Naive thymus-derived CD4-positive, alpha-beta T cell (primary cell): ENCODE measurements at regions of chr16 and their contacts with region 1.

Region 1: GRCh38 chr16:30429678-30430427 is at the start of gene DCTPP1:
- DNase-seq: peak; percentile 79 to 99 (median 97)
- ATAC-seq: peak; percentile 98
- H3K4me3 ChIP-seq: peak within 1 kb of the TSS; percentile 67
- H3K4me3 Mint-ChIP-seq: no peak within 1 kb of the TSS
- H3K27ac ChIP-seq: peak within 1 kb of the TSS; percentile 85
- H3K27ac Mint-ChIP-seq: peak within 1 kb of the TSS in 1 of 9 donors; percentile 38
- H3K4me1 ChIP-seq: peaks cover 16 to 19% of the 10 kb centered on the region in 2 donors
- H3K4me1 Mint-ChIP-seq: peaks cover 14 to 29% (median 21%) of the 10 kb centered on the region in 7 donors
- H3K27me3 ChIP-seq: no peaks in the 10 kb centered on the region
- H3K27me3 Mint-ChIP-seq: no peaks in the 10 kb centered on the region
- total RNA-seq, gene DCTPP1: 11.6 to 74.1 (median 13.8) TPM

Region 2: DNA sequence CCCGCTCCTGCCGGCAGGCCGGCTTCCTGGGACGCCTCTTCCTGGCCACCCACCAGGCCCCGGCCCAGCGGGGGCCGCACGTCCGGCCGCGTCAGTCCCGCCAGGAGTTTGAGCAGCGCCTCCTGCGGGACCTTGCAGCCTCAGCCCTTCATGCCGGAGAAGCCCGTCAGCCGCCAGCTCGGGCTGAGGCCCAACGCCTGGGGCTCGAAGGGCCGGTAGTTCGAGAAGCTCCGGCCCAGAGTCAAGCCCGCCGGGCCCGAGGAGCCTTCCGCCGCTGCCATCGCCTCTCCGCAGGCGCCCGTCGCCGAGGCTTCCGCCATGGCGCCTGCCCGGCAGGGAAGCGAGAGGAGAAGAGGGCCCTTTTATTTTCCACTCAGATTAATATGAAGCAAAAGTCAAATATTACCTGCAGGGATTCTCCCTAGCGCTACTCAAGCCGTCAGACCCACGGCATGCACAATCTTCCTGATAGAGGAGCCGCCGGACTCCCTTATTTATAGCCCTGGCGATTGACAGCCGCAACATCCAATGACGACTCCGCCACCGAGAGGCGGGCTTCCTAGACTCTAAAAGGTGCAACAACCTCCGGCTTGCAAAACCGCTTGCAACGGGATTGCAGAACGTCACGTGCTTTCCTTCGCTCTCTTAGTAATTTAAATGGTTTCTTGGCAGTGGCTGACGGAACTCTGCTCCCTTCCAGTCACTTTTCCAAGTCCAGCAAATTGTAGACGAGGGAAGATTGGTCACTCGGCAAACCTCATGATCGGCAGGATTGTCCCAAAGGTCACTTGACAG is 15.8 kb after region 1 on chr16 and contains the start of gene SEPHS2:
- CTCF ChIA-PET with region 1: interaction called, 5 read pairs
- POLR2A ChIA-PET with region 1: interaction called, 14 read pairs
- intact Hi-C with region 1: loop called (anchors 1 kb)
- DNase-seq: peak; percentile 84 to 96 (median 94)
- ATAC-seq: peak; percentile 96
- H3K4me3 ChIP-seq: peak within 1 kb of the TSS; percentile 97
- H3K4me3 Mint-ChIP-seq: peak within 1 kb of the TSS; percentile 85 to 97 (median 95)
- H3K27ac ChIP-seq: peak within 1 kb of the TSS; percentile 92
- H3K27ac Mint-ChIP-seq: peak within 1 kb of the TSS; percentile 90 to 98 (median 96)
- H3K4me1 ChIP-seq: peaks cover 26 to 37% of the 10 kb centered on the region in 2 donors
- H3K4me1 Mint-ChIP-seq: peaks cover 30 to 47% (median 41%) of the 10 kb centered on the region in 7 donors
- H3K27me3 ChIP-seq: no peaks in the 10 kb centered on the region
- H3K27me3 Mint-ChIP-seq: no peaks in the 10 kb centered on the region
- total RNA-seq, gene SEPHS2: 20.9 to 69.6 (median 47.1) TPM

Region 3: DNA sequence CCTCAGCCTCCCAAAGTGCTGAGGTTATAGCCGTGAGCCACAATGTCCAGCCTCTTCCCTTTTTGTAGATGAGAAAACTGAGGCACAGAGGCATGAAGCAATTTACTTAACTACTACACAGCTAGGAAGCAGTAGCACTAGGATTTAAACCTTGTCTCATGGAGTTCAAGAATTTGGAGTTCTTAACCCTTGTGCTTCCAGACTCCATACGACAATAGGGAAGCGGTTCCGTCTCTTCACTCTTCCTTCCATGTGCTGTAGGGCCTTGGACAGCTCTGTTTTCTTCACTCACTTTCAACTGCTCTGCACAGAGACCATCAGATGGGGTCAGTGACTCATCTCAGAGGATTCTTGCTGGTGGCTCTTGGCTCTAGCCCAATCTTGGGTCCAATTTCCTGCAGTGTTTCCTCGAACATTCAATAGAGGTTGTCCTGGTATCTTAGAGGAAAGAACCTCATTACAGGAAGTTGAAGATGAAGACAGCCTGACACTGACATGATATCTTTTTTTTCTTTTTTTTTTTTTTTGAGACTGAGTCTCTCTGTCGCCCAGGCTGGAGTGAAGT is 62.0 kb after region 1 on chr16:
- CTCF ChIA-PET with region 1: interaction called, 8 read pairs
- POLR2A ChIA-PET with region 1: interaction called, 4 read pairs
- intact Hi-C with region 1: loop called in 1 of 2 experiments (anchors 1 kb)
- DNase-seq: peak in 4 of 9 donors; percentile 12 to 22 (median 16)
- ATAC-seq: no peak
- H3K4me3 ChIP-seq: no peak overlapping the region
- H3K4me3 Mint-ChIP-seq: peak overlapping the region in 4 of 10 donors; percentile 26 to 62 (median 35)
- H3K27ac ChIP-seq: peak overlapping the region; percentile 34
- H3K27ac Mint-ChIP-seq: peak overlapping the region; percentile 58 to 92 (median 77)
- H3K4me1 ChIP-seq: peaks cover 0 to 7% of the 10 kb centered on the region in 2 donors
- H3K4me1 Mint-ChIP-seq: peaks cover 16 to 43% (median 21%) of the 10 kb centered on the region in 7 donors
- H3K27me3 ChIP-seq: no peaks in the 10 kb centered on the region
- H3K27me3 Mint-ChIP-seq: no peaks in the 10 kb centered on the region

Region 4: GRCh38 chr16:30557957-30558788 is 128.3 kb after region 1 on chr16 and contains the start of gene ZNF764:
- CTCF ChIA-PET with region 1: interaction called, 9 read pairs
- POLR2A ChIA-PET with region 1: interaction called, 16 read pairs
- intact Hi-C with region 1: loop called (anchors 1 kb)
- DNase-seq: peak; percentile 79 to 95 (median 91)
- ATAC-seq: peak; percentile 95
- H3K4me3 ChIP-seq: peak within 1 kb of the TSS; percentile 92
- H3K4me3 Mint-ChIP-seq: peak within 1 kb of the TSS; percentile 83 to 92 (median 90)
- H3K27ac ChIP-seq: peak within 1 kb of the TSS; percentile 99
- H3K27ac Mint-ChIP-seq: peak within 1 kb of the TSS; percentile 87 to 94 (median 92)
- H3K4me1 ChIP-seq: peaks cover 12 to 15% of the 10 kb centered on the region in 2 donors
- H3K4me1 Mint-ChIP-seq: peaks cover 33 to 58% (median 43%) of the 10 kb centered on the region in 7 donors
- H3K27me3 ChIP-seq: no peaks in the 10 kb centered on the region
- H3K27me3 Mint-ChIP-seq: no peaks in the 10 kb centered on the region
- total RNA-seq, gene ZNF764: 11.9 to 20.9 (median 19.3) TPM

Region 5: DNA sequence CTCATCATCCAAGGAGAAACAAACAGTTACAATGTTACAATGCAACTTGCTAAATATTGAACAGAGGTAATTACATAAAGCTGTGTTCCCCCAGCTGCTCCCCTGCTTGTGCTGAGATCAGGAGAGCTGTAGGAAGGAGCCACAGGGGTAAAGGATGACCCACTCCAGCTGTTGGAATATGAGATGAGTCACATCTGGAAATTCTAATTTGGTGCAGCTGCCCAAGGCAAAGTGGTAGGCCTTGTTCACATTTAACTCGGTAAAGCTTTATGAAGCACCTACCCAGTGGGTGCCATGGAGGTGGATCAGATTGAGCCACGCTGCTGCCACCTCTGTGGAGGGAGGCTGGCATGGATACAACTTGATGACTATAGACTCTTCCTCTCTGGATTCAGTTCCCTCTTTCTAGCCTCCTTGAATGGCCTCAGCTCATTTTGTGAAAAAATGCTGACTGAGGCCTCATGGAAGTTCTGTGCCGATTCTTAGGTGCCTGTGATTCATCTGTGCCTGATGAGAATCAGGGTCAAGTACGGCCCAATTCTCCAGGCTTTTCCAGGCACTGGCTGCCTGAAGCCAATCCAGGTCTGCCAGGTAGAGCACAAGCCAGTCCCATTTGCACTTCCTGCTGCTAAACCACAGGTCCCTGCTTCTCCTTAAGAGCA is 172.9 kb after region 1 on chr16:
- CTCF ChIA-PET with region 1: interaction called, 8 read pairs
- POLR2A ChIA-PET with region 1: no interaction called
- intact Hi-C with region 1: loop called (anchors 1 kb)
- DNase-seq: no peak
- ATAC-seq: peak; percentile 49
- H3K4me3 ChIP-seq: no peak overlapping the region
- H3K4me3 Mint-ChIP-seq: no peak overlapping the region
- H3K27ac ChIP-seq: no peak overlapping the region
- H3K27ac Mint-ChIP-seq: no peak overlapping the region
- H3K4me1 ChIP-seq: no peaks in the 10 kb centered on the region
- H3K4me1 Mint-ChIP-seq: peaks cover 0 to 15% (median 11%) of the 10 kb centered on the region in 7 donors
- H3K27me3 ChIP-seq: no peaks in the 10 kb centered on the region
- H3K27me3 Mint-ChIP-seq: no peaks in the 10 kb centered on the region

Region 6: DNA sequence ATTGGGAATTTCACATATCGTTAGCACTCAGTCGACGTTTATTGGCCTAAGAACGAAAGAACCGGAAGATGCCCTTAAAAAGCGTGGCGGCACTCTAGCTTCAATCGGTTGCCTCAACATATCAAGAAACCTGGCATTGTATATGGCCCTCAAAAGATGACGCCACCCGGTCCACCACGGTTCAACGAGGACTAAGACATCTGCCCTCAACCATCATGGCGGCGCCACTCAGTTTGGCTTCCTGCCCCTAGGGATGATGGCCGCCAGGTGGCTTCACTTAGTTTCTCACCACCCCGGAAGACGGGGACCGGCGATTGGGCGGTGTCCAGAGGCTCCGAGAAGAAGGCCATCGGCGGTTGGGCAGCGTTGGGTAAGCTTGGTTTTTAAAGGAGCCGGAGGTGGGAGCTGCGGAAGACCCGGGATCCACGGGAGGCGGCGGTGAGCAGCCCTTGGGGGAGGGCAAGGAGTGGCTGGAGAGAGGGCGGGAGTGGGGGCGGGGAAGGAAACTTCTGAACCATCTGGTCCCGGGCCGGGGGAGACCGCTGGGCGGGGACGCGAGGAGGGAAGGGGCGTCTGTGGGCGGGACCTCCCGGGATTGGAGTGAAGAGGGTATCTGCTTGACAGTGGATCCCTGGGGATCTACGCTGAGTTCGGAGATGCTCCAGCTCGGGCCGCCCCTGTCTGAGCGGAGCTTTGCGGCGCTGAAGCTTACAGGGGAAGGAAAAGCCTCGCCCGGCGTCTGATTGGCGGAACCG is 220.7 kb after region 1 on chr16 and contains the start of gene PRR14:
- CTCF ChIA-PET with region 1: no interaction called
- POLR2A ChIA-PET with region 1: no interaction called
- intact Hi-C with region 1: loop called (anchors 1 to 2 kb)
- DNase-seq: peak; percentile 87 to 99 (median 96)
- ATAC-seq: peak; percentile 93
- H3K4me3 ChIP-seq: peak within 1 kb of the TSS; percentile 100
- H3K4me3 Mint-ChIP-seq: peak within 1 kb of the TSS; percentile 86 to 100 (median 98)
- H3K27ac ChIP-seq: peak within 1 kb of the TSS; percentile 90
- H3K27ac Mint-ChIP-seq: peak within 1 kb of the TSS; percentile 95 to 99 (median 98)
- H3K4me1 ChIP-seq: peaks cover 9 to 10% of the 10 kb centered on the region in 2 donors
- H3K4me1 Mint-ChIP-seq: peaks cover 19 to 39% (median 22%) of the 10 kb centered on the region in 7 donors
- H3K27me3 ChIP-seq: no peaks in the 10 kb centered on the region
- H3K27me3 Mint-ChIP-seq: peaks cover 0 to 3% (median 0%) of the 10 kb centered on the region in 5 donors
- total RNA-seq, gene PRR14: 57.6 to 91.9 (median 82.5) TPM

Region 7: GRCh38 chr16:30715737-30716445 is 286.0 kb after region 1 on chr16:
- CTCF ChIA-PET with region 1: no interaction called
- POLR2A ChIA-PET with region 1: no interaction called
- intact Hi-C with region 1: no loop called
- DNase-seq: peak in 4 of 9 donors; percentile 12 to 57 (median 28)
- ATAC-seq: peak; percentile 93
- H3K4me3 ChIP-seq: no peak overlapping the region
- H3K4me3 Mint-ChIP-seq: peak overlapping the region; percentile 6 to 85 (median 58)
- H3K27ac ChIP-seq: peak overlapping the region; percentile 27
- H3K27ac Mint-ChIP-seq: peak overlapping the region; percentile 78 to 96 (median 91)
- H3K4me1 ChIP-seq: peaks cover 0 to 16% of the 10 kb centered on the region in 2 donors
- H3K4me1 Mint-ChIP-seq: peaks cover 20 to 39% (median 32%) of the 10 kb centered on the region in 7 donors
- H3K27me3 ChIP-seq: no peaks in the 10 kb centered on the region
- H3K27me3 Mint-ChIP-seq: no peaks in the 10 kb centered on the region

Region 8: DNA sequence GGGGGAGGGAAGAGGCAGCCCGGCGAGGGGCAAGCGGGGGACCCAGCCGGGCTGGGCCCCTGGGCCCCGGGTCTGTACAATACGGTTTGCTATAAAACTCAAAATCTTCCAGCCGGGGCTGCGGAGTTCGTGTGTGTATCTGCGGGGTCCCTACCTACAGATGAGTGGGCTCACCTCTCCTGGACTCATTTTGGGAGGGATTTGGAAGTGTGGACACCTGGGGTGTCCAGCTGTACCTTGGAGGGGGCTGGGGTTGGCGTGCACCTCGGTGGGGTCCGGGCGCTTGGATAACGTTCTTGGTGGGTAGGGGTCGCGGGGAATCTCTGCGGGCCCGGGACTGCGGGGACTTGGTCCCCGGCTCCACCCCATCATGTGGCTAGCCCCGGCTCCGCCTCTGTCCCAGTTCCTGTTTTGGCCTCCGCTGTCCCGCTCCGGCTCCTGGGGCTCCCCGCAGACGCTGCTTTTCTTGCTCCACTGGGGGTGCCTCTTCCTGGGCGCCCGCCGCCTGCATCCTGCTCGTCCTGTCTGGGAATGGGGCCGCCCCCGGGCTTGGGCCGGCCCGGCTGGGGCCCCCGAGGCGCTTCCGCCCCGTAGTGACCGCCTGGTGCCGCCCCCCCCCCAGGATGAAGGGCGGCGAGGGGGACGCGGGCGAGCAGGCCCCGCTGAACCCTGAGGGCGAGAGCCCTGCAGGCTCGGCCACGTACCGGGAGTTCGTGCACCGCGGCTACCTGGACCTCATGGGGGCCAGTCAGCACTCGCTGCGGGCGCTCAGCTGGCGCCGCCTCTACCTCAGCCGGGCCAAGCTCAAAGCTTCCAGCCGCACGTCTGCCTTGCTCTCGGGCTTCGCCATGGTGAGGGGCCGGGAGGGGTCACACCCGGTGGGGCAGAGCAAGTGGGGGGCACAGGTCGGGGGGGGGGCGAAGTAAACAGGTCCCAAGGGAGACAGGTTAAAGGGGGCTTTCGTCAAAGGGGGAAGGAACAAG is 519.1 kb after region 1 on chr16 and contains the start of gene ORAI3:
- CTCF ChIA-PET with region 1: no interaction called
- POLR2A ChIA-PET with region 1: no interaction called
- intact Hi-C with region 1: no loop called
- DNase-seq: peak in 4 of 9 donors; percentile 20 to 62 (median 28)
- ATAC-seq: peak; percentile 77
- H3K4me3 ChIP-seq: peak within 1 kb of the TSS; percentile 74
- H3K4me3 Mint-ChIP-seq: peak within 1 kb of the TSS; percentile 87 to 98 (median 90)
- H3K27ac ChIP-seq: peak within 1 kb of the TSS; percentile 75
- H3K27ac Mint-ChIP-seq: peak within 1 kb of the TSS; percentile 64 to 92 (median 80)
- H3K4me1 ChIP-seq: peaks cover 11 to 15% of the 10 kb centered on the region in 2 donors
- H3K4me1 Mint-ChIP-seq: peaks cover 13 to 23% (median 17%) of the 10 kb centered on the region in 7 donors
- H3K27me3 ChIP-seq: no peaks in the 10 kb centered on the region
- H3K27me3 Mint-ChIP-seq: no peaks in the 10 kb centered on the region
- total RNA-seq, gene ORAI3: 6.0 to 29.8 (median 18.4) TPM